Mammary epithelial cell (primary cell): ENCODE measurements at regions of chr3 and their contacts with region 1.

Region 1: DNA sequence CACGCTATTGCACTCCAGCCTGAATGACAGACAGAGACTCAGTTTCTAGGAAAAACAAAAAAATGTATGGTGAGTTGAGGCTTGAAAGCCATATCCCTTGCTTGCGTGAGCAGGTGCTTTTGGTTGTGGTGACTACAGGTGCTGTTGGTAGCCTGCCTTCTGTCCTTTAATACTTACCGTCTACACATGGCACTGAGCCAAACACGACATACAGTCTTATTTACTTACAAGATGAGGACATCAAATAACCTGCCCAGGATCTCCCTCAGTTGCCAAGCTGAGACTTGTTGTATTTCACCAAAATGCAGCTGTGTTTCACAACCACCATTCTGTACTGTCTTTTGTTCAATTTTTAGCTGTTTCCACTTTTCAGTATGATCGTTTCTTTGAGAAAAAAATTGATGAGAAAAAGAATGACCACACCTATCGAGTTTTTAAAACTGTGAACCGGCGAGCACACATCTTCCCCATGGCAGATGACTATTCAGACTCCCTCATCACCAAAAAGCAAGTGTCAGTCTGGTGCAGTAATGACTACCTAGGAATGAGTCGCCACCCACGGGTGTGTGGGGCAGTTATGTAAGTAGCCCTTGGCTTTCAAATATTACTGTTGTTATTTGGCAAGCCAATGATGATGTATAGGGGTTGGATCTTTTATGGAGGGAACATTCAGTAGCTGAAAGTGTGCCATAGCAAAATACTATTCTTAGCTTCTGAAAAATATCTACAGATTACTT is 6.5 kb downstream of the ALAS1 start:
- DNase-seq: peak; percentile 72
- H3K4me3 ChIP-seq: no peak overlapping the region
- H3K27ac ChIP-seq: no peak overlapping the region
- H3K4me1 ChIP-seq: peaks cover 23% of the 10 kb centered on the region
- H3K27me3 ChIP-seq: no peaks in the 10 kb centered on the region
- CTCF ChIP-seq: no peak

Region 2: DNA sequence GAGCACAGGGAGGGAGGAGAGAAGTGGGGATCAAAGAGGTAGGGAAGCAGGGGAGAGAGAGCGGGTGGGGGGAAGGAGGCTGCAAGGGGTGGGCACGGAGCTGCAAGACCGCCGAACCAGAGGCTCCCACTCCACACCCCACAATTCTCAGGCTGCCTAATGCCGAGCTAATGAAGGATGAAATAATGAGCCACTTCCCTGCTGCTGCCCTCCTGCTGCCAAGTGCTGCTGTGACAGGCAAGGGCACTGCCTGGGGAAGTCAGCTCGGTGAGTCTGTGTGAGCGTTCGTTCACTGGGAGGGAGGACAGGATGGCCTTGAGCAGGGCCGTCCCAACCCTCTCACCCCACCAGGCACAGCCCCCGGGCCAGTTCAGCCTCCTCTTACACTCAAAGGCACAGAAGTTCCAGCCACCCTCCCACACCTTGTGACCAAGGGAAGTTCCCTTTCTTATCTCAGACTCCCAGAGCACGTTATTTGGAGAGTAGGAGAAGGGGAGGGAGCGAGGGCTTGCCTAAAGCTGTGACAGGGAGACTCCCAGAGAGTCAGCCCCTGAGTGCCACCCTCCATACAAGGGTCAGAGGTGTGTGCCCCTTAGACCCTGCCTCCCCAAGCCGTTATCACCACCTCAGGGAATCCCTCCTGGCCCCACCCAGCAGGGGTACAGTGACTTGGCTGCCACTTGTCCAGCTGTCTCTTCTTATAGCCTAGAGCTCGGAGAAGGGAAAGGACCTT is 95.5 kb after region 1 on chr3:
- CTCF ChIA-PET with region 1: no interaction called
- dilution Hi-C with region 1: loop called (anchors 5 kb)
- in situ Hi-C with region 1: no loop called
- intact Hi-C with region 1: no loop called
- DNase-seq: peak; percentile 29
- H3K4me3 ChIP-seq: no peak overlapping the region
- H3K27ac ChIP-seq: no peak overlapping the region
- H3K4me1 ChIP-seq: no peaks in the 10 kb centered on the region
- H3K27me3 ChIP-seq: no peaks in the 10 kb centered on the region
- CTCF ChIP-seq: peak in 1 of 2 donors; percentile 15